ENCODE measurements at regions of chr5 and their contacts with region 1.

Region 1: DNA sequence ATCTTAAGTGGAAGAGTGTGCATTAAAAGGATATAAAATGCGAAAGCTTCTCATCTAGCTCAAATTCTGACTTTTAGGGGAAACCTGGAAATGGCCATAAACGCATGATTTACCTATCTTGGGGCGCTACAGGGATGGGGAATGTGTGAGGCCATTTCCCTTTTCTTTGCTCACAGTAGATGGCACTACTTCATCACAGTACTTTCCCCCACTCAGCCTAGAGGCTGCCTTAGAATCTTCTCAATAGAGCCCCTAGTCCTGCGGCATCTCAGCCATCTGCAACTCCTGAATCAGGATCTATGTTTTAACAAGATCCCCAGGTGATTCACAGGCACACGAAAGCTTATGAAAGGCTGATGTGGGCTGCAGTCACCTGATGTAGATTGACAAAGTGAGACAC is 110.8 kb downstream of the LHFPL2 start:
- DNase-seq: no peak
- ATAC-seq: no peak
- H3K4me3 ChIP-seq: no peak overlapping the region
- H3K27ac ChIP-seq: no peak overlapping the region
- H3K4me1 ChIP-seq: no peaks in the 10 kb centered on the region
- H3K27me3 ChIP-seq: no peaks in the 10 kb centered on the region

Region 2: DNA sequence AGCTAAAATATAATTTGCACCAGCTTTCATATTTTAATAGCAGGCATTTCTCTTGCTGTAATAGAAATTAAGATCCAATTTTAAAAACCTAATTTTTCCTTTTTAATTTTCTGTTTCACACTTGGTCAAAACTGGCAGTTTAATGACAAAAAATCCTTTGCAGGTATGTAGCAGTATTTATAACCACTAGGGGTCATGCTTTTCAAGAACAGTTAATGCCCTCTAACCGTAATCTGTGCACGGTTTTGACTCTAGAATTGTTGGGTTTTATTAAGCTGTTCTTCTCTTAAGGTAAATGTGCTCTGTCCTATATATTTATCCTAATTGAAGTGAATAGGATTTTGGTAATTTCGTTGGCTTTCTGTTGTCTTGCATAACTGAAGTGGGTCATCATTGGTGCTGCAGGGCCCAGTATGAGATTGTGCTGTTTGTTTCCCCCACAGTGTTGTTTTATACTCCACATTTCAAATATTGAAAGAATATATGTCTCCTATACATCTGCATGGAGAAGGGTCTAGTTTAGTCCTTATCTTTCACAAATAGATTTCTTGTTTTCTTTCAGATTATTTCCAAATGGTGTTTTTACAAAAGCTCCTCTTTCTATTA is 70.0 kb before region 1 on chr5:
- intact Hi-C with region 1: loop called (anchors 5 to 10 kb)
- DNase-seq: no peak
- ATAC-seq: no peak
- H3K4me3 ChIP-seq: no peak overlapping the region
- H3K27ac ChIP-seq: no peak overlapping the region
- H3K4me1 ChIP-seq: peaks cover 0 to 1% of the 10 kb centered on the region in 2 donors
- H3K27me3 ChIP-seq: no peaks in the 10 kb centered on the region

Region 3: GRCh38 chr5:78497573-78498533 is 40.0 kb before region 1 on chr5:
- intact Hi-C with region 1: loop called in 1 of 2 experiments (anchors 5 kb)
- DNase-seq: no peak
- ATAC-seq: no peak
- H3K4me3 ChIP-seq: no peak overlapping the region
- H3K27ac ChIP-seq: no peak overlapping the region
- H3K4me1 ChIP-seq: peaks cover 2 to 14% of the 10 kb centered on the region in 2 donors
- H3K27me3 ChIP-seq: no peaks in the 10 kb centered on the region

Region 4: DNA sequence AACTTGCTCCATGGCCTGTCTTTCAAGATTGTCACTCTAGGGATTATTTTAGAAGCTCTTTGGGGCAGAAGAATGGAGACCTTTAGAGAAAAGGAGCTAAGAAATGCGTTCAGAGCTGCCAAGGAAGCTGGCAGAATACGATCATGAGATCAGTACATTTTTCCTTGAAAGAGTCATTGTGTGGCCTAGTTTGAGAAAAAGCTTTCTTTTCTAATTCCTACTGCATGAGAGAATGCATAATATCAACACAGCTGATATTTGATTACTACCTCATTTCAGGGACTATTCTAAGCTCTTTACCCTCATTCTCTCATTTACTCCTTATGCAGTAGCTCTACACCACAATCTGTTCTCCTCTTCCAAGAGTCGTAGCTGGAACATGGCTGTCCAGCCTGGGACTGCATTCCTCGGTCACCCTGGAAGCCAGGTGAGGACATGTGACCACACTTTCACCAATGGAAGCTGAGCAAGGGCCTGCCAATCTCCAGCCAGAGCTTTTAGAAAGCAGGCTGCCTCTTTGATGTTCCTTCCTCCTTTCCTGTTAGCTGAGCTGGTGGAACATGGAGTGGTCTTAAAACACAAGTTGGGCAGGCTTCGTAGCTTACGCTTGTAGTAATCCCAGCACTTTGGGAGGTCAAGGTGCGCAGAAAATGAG is 210.0 kb after region 1 on chr5:
- intact Hi-C with region 1: loop called in 1 of 2 experiments (anchors 10 kb)
- DNase-seq: no peak
- ATAC-seq: peak; percentile 88
- H3K4me3 ChIP-seq: no peak overlapping the region
- H3K27ac ChIP-seq: peak overlapping the region; percentile 83 to 96
- H3K4me1 ChIP-seq: peaks cover 3 to 10% of the 10 kb centered on the region in 2 donors
- H3K27me3 ChIP-seq: no peaks in the 10 kb centered on the region

Region 5: GRCh38 chr5:78964887-78965286 is 427.1 kb after region 1 on chr5:
- intact Hi-C with region 1: loop called in 1 of 2 experiments (anchors 5 kb)
- DNase-seq: no peak
- ATAC-seq: no peak
- H3K4me3 ChIP-seq: no peak overlapping the region
- H3K27ac ChIP-seq: no peak overlapping the region
- H3K4me1 ChIP-seq: no peaks in the 10 kb centered on the region
- H3K27me3 ChIP-seq: no peaks in the 10 kb centered on the region